ENCODE measurements at regions of chr12 and their contacts with region 1.

Region 1: GRCh38 chr12:64403707-64404469 is at the start of gene XPOT:
- DNase-seq: peak; percentile 84 to 95
- ATAC-seq: peak; percentile 88 to 93
- H3K4me3 ChIP-seq: peak within 1 kb of the TSS; percentile 93 to 99 (median 98)
- H3K27ac ChIP-seq: peak within 1 kb of the TSS; percentile 100
- H3K4me1 ChIP-seq: peaks cover 10 to 12% of the 10 kb centered on the region in 2 donors
- H3K27me3 ChIP-seq: no peaks in the 10 kb centered on the region
- CTCF ChIP-seq: peak in 1 of 5 experiments; percentile 22
- POLR2A ChIP-seq: no peak
- total RNA-seq, gene XPOT: 21.1 to 27.1 (median 25.1) TPM

Region 2: DNA sequence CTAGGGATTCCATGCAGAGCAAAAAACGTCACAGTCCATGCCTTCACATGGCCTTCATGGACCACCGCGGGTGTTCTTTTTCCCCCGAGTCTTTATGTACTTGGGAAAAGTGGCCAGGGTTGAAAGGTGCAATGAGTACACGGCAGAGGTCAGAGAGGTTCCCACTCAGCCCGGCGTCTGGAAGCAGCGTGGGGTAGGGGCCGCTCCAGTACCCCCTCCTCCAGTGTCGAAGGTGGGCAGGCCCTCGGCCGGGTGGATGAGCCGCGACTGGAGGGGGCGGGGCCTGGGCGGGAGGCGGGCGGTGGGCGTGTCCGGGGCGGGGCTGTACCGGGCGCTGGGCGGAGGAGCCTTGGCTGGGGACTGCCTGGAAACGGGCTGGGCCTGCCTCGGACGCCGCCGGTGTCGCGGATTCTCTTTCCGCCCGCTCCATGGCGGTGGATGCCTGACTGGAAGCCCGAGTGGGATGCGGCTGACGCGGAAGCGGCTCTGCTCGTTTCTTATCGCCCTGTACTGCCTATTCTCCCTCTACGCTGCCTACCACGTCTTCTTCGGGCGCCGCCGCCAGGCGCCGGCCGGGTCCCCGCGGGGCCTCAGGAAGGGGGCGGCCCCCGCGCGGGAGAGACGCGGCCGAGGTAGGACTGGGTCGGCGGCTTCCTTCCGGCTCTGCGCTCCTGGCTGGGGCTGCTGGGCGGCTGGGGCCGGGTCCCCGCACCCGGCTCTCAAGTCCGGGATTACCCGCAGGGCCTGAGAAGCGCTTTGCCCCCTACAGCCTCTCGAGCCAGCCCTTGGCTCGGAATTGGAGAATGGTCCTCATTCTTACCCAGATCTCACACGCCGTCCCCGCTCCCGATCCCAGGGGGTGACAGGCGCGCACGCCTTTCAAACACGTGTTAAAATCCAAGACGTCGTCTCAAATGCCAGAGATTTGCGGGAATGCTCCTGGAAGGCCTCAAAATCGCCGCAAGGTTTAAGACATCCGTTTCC is 624.1 kb before region 1 on chr12 and contains the start of gene RXYLT1:
- in situ Hi-C with region 1: no loop called
- intact Hi-C with region 1: loop called (anchors 5 kb)
- DNase-seq: peak; percentile 74 to 76
- ATAC-seq: peak; percentile 95 to 97
- H3K4me3 ChIP-seq: peak within 1 kb of the TSS; percentile 66 to 78 (median 76)
- H3K27ac ChIP-seq: peak within 1 kb of the TSS; percentile 78 to 89 (median 82)
- H3K4me1 ChIP-seq: peaks cover 11 to 13% of the 10 kb centered on the region in 2 donors
- H3K27me3 ChIP-seq: no peaks in the 10 kb centered on the region
- CTCF ChIP-seq: peak in 1 of 5 experiments; percentile 26
- POLR2A ChIP-seq: peak; percentile 53 to 56
- total RNA-seq, gene RXYLT1: 9.4 to 16.5 (median 14.1) TPM

Region 3: DNA sequence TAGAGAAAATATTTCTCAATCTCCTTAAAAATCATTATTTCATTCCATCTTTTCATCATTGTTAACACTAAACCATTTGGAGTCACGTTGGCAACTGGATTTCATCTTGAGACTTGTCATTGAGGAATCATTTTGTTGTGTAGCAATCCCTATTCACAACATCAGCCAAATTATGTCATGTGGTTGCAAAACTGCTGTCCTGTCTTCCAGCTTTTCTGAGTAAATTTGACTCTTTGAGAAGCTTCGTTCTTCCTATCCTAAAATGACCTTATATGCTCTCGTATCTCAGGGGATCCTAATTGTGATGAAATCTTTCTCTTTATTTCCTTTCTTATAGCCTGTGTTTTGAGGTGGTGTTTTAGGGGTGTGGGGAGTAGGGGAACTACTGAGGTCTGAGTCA is 151.2 kb before region 1 on chr12:
- in situ Hi-C with region 1: no loop called
- intact Hi-C with region 1: no loop called
- DNase-seq: peak in 1 of 2 donors; percentile 21
- ATAC-seq: peak; percentile 81 to 83
- H3K4me3 ChIP-seq: no peak overlapping the region
- H3K27ac ChIP-seq: peak overlapping the region in 3 of 4 donors; percentile 5 to 39 (median 8)
- H3K4me1 ChIP-seq: peaks cover 6 to 18% of the 10 kb centered on the region in 2 donors
- H3K27me3 ChIP-seq: no peaks in the 10 kb centered on the region
- CTCF ChIP-seq: no peak
- POLR2A ChIP-seq: no peak

Region 4: DNA sequence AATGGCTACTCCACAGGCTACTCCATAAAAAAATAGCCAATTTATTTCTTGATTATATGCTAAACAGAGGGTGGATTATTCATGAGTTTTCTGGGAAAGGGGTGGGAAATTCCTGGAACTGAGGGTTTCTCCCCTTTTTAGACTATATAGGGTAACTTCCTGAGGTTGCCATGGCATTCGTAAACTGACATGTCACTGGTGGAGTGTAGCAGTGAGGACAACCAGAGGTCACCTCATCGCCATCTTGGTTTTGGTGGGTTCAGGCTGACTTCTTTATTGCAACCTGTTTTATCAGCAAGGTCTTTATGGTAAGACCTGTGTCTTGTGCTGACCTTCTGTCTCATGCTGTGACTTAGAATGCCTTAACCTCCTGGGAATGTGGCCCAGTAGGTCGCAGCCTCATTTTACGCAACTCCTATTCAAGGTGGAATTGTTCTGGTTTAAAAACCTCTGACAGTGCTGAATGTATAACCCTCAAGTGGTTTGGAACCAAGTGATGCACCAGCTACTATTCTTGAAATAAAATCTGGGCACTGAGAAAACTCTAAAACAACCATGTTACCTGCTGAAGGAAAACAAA is 41.1 kb before region 1 on chr12:
- in situ Hi-C with region 1: no loop called
- intact Hi-C with region 1: no loop called
- DNase-seq: no peak
- ATAC-seq: no peak
- H3K4me3 ChIP-seq: no peak overlapping the region
- H3K27ac ChIP-seq: no peak overlapping the region
- H3K4me1 ChIP-seq: no peaks in the 10 kb centered on the region
- H3K27me3 ChIP-seq: no peaks in the 10 kb centered on the region
- CTCF ChIP-seq: no peak
- POLR2A ChIP-seq: no peak

Region 5: DNA sequence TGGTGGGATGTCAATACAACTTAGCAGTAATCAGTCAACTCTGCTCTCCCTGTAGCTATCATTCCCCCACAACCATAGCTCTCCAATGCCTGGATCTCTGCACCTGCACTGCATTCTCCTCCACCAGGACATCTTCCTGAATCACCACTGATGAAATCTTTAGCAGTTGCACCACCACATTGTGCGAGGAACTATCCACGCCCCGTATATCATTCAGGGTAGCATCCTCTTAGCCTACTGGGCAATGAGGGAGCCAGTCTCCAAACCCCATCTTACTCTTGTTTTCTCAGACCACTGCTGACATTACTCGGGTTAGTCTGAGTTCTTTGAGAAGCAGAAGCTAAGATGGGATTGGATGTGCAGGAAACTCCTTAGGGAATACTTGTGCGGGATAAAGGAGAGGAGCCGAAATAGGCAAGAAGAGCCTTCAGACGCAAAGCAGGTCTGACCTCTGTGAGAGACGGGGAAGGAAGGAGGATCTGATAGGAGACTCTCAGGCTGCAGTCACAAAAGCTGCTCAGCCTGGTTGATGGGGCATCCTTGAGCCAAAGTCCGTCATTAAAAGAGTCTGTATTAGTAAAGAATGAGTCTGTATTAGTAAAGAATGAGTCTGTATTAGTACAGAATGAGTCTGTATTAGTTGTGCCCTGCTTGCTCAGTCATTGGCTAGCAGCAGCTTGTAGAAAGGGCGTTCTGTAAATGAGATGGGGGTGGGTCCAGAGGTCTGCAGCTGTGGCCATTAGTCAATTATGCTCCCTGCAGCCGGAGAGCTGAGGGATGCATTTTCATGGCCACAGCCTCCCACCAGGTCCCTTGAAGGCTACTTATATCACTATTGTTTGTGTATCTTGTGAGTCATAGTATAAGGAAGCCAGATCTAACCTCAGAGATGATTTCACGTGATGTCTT is 156.8 kb after region 1 on chr12:
- in situ Hi-C with region 1: no loop called
- intact Hi-C with region 1: no loop called
- DNase-seq: no peak
- ATAC-seq: no peak
- H3K4me3 ChIP-seq: no peak overlapping the region
- H3K27ac ChIP-seq: no peak overlapping the region
- H3K4me1 ChIP-seq: no peaks in the 10 kb centered on the region
- H3K27me3 ChIP-seq: no peaks in the 10 kb centered on the region
- CTCF ChIP-seq: no peak
- POLR2A ChIP-seq: no peak

Region 6: GRCh38 chr12:64759035-64759901 is 355.4 kb after region 1 on chr12 and contains the start of gene GNS:
- in situ Hi-C with region 1: no loop called
- intact Hi-C with region 1: loop called (anchors 1 kb)
- DNase-seq: peak; percentile 95
- ATAC-seq: peak; percentile 96
- H3K4me3 ChIP-seq: peak within 1 kb of the TSS; percentile 97 to 98 (median 97)
- H3K27ac ChIP-seq: peak within 1 kb of the TSS; percentile 90 to 93 (median 92)
- H3K4me1 ChIP-seq: peaks cover 12 to 19% of the 10 kb centered on the region in 2 donors
- H3K27me3 ChIP-seq: no peaks in the 10 kb centered on the region
- CTCF ChIP-seq: peak in 2 of 5 experiments; percentile 29 to 45
- POLR2A ChIP-seq: peak; percentile 36 to 70
- total RNA-seq, gene GNS: 41.9 to 56.5 (median 53.9) TPM

Measured in gastrocnemius medialis (tissue), 4 donors.